PC-3 (cell line): ENCODE measurements at regions of chr4 and their contacts with region 1.

Region 1: GRCh38 chr4:41318867-41319535 is 62.3 kb downstream of the UCHL1 start:
- DNase-seq: peak; percentile 88
- ATAC-seq: peak; percentile 75
- H3K4me3 ChIP-seq: peak overlapping the region; percentile 31; the same call in 1 of the 2 replicates
- H3K27ac ChIP-seq: peak overlapping the region; percentile 99
- H3K4me1 ChIP-seq: peaks cover 34% of the 10 kb centered on the region
- H3K27me3 ChIP-seq: no peaks in the 10 kb centered on the region
- CTCF ChIP-seq: no peak

Region 2: GRCh38 chr4:41305476-41305875 is 13.5 kb before region 1 on chr4:
- CTCF ChIA-PET with region 1: no interaction called
- POLR2A ChIA-PET with region 1: interaction called, 14 read pairs
- intact Hi-C with region 1: no loop called
- DNase-seq: no peak
- ATAC-seq: no peak
- H3K4me3 ChIP-seq: no peak overlapping the region
- H3K27ac ChIP-seq: no peak overlapping the region
- H3K4me1 ChIP-seq: no peaks in the 10 kb centered on the region
- H3K27me3 ChIP-seq: no peaks in the 10 kb centered on the region
- CTCF ChIP-seq: no peak

Region 3: GRCh38 chr4:41575207-41575606 is 256.2 kb after region 1 on chr4:
- CTCF ChIA-PET with region 1: no interaction called
- POLR2A ChIA-PET with region 1: no interaction called
- intact Hi-C with region 1: loop called (anchors 1 kb)
- DNase-seq: peak; percentile 82
- ATAC-seq: peak; percentile 55; the same call in 1 of the 2 replicates
- H3K4me3 ChIP-seq: 0 out of 2 replicates have a peak overlapping the region, but pooled peaks have one; percentile 2
- H3K27ac ChIP-seq: peak overlapping the region; percentile 74
- H3K4me1 ChIP-seq: peaks cover 25% of the 10 kb centered on the region
- H3K27me3 ChIP-seq: no peaks in the 10 kb centered on the region
- CTCF ChIP-seq: no peak